Dendritic cell treated with granulocyte-macrophage colony-stimulating factor and Interleukin-4, amounts not matched to agents 40 ng/mL and 50 ng/mL, for 4 days (primary cell): ENCODE measurements at regions of chr4 and their contacts with region 1.

Region 1: DNA sequence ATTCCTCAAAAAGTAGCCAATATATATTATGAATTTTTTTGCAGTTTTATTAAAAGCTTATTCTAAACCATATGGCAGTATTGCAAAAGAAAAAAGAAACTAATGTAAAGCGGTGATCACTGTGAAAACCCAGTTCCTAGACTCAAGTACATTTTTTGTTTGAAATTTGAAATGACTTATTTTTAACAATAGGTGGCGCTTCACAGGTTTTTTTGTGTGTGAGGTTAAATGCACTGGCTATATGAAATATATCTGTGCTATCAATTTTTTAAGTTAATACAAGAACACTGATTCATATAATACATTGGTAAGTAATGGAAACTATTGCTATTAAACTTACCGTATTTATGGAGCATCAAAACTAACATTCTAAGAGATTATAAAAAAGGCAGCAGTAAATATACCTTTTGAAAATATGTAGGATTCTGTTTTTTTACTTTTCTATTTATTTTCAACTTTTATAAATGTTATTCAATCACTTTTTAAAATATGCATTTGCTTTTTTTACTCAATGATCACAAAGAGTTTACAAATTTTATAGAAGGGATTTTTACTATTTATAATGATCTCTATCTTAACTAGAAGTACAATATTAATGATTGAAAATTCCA is 5.6 kb upstream of the SPRY1 start:
- H3K4me3 Mint-ChIP-seq: no peak overlapping the region
- H3K27ac Mint-ChIP-seq: no peak overlapping the region
- H3K4me1 Mint-ChIP-seq: peaks cover 6% of the 10 kb centered on the region
- H3K27me3 Mint-ChIP-seq: no peaks in the 10 kb centered on the region

Region 2: GRCh38 chr4:122900314-122900713 is 490.6 kb before region 1 on chr4:
- intact Hi-C with region 1: no loop called
- H3K4me3 Mint-ChIP-seq: no peak overlapping the region
- H3K27ac Mint-ChIP-seq: no peak overlapping the region
- H3K4me1 Mint-ChIP-seq: no peaks in the 10 kb centered on the region
- H3K27me3 Mint-ChIP-seq: no peaks in the 10 kb centered on the region

Region 3: GRCh38 chr4:123350191-123350544 is 40.8 kb before region 1 on chr4:
- intact Hi-C with region 1: no loop called
- H3K4me3 Mint-ChIP-seq: no peak overlapping the region
- H3K27ac Mint-ChIP-seq: no peak overlapping the region
- H3K4me1 Mint-ChIP-seq: peaks cover 11% of the 10 kb centered on the region
- H3K27me3 Mint-ChIP-seq: peaks cover 2% of the 10 kb centered on the region

Region 4: GRCh38 chr4:123555233-123555806 is 164.4 kb after region 1 on chr4:
- intact Hi-C with region 1: loop called (anchors 5 kb)
- H3K4me3 Mint-ChIP-seq: no peak overlapping the region
- H3K27ac Mint-ChIP-seq: peak overlapping the region; percentile 52
- H3K4me1 Mint-ChIP-seq: peaks cover 39% of the 10 kb centered on the region
- H3K27me3 Mint-ChIP-seq: no peaks in the 10 kb centered on the region

Region 5: DNA sequence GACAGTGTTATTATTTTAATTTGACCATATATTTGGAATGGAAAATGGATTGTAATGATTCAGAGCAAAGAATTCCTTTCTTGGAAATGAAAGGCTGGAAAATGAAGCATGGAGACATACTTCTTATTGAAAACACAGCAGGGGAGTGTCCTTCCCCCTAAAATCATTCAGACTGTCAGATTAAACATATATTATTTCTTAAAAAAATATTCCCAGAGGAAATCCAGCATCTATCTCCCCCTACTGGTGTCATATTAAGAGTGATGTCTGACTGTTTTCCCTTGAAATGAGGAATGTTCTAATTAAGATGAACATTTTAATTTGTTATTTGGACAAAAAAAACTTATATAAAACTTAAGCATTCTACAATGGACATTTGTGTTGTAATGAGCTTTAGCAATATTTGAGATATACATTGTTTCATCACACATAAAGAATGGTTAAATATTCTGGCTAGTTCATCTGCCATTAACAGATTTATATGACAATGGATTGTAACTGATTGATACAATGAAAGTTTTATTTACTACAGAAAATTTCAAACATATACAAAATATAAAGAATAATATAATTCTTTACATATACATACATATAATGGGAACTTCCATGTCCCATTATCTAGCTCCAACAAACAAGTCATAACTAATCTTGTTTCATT is 270.3 kb after region 1 on chr4:
- intact Hi-C with region 1: loop called (anchors 2 kb)
- H3K4me3 Mint-ChIP-seq: no peak overlapping the region
- H3K27ac Mint-ChIP-seq: no peak overlapping the region
- H3K4me1 Mint-ChIP-seq: no peaks in the 10 kb centered on the region
- H3K27me3 Mint-ChIP-seq: peaks cover 12% of the 10 kb centered on the region

Region 6: GRCh38 chr4:124590480-124590879 is 1199.5 kb after region 1 on chr4:
- intact Hi-C with region 1: no loop called
- H3K4me3 Mint-ChIP-seq: no peak overlapping the region
- H3K27ac Mint-ChIP-seq: no peak overlapping the region
- H3K4me1 Mint-ChIP-seq: peaks cover 14% of the 10 kb centered on the region
- H3K27me3 Mint-ChIP-seq: peaks cover 2% of the 10 kb centered on the region